PC-3 (cell line): ENCODE measurements at regions of chr4 and their contacts with region 1.

Region 1: GRCh38 chr4:154807042-154807630 is 26.1 kb downstream of the RBM46 start:
- DNase-seq: peak; percentile 71
- ATAC-seq: no peak
- H3K4me3 ChIP-seq: peak overlapping the region; percentile 41; the same call in 1 of the 2 replicates
- H3K27ac ChIP-seq: no peak overlapping the region
- H3K4me1 ChIP-seq: no peaks in the 10 kb centered on the region
- H3K27me3 ChIP-seq: no peaks in the 10 kb centered on the region
- CTCF ChIP-seq: peak; percentile 89

Region 2: DNA sequence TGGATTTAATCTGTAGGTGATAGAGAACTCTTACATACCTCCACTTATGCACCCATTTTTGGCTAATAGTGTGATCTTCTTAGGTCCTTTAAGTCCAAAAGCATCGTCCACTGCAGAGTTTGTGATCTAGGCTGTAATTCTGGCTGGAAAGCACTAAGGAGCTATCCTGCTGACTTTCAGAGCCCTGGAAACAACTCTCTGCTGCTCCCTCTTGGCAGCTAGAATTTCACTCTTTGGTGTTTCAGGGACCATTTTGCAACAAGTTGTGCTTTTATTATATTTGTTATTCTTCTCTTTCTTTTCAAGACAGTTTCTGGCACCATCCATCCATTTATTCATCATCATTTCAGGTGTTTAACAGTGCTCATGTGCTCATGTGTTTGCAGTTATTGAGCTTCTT is 104.0 kb after region 1 on chr4:
- CTCF ChIA-PET with region 1: interaction called, 8 read pairs
- POLR2A ChIA-PET with region 1: no interaction called
- intact Hi-C with region 1: loop called (anchors 1 kb)
- DNase-seq: peak; percentile 34
- ATAC-seq: no peak
- H3K4me3 ChIP-seq: no peak overlapping the region
- H3K27ac ChIP-seq: no peak overlapping the region
- H3K4me1 ChIP-seq: peaks cover 12% of the 10 kb centered on the region
- H3K27me3 ChIP-seq: no peaks in the 10 kb centered on the region
- CTCF ChIP-seq: peak; percentile 46

Region 3: GRCh38 chr4:154928640-154929257 is 121.6 kb after region 1 on chr4:
- CTCF ChIA-PET with region 1: interaction called, 5 read pairs
- POLR2A ChIA-PET with region 1: no interaction called
- intact Hi-C with region 1: loop called (anchors 1 kb)
- DNase-seq: peak; percentile 58
- ATAC-seq: peak; percentile 71
- H3K4me3 ChIP-seq: no peak overlapping the region
- H3K27ac ChIP-seq: no peak overlapping the region
- H3K4me1 ChIP-seq: no peaks in the 10 kb centered on the region
- H3K27me3 ChIP-seq: no peaks in the 10 kb centered on the region
- CTCF ChIP-seq: peak; percentile 74

Region 4: DNA sequence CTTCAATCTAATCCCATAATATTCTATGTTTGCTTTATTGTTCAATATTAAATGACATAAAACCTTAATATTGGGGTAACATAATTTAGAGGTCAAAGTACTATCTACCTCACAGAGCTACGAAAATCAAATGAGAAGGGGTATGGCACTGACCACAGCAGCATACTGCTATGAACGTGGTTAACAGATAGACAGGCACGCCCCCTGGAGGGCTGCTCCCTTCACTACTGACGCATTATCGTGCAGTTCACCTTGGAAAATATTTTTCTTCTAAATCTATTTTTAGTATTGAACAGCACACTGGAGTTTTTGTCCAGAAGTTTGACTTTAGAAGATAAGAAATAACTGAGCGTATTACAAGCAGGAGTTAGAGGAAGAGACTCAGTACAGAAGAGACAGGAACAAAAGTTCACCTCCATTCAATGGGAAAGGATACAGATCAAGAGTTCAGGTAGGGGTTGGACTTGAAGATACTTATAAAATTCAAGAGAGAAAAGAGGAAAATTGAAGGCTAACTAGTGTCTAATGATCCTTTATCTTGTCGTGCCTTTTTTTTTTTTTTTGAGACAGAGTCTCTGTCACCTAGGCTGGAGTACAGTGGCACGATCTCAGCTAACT is 546.9 kb after region 1 on chr4:
- CTCF ChIA-PET with region 1: no interaction called
- POLR2A ChIA-PET with region 1: no interaction called
- intact Hi-C with region 1: loop called (anchors 5 kb)
- DNase-seq: peak; percentile 73
- ATAC-seq: peak; percentile 84
- H3K4me3 ChIP-seq: no peak overlapping the region
- H3K27ac ChIP-seq: no peak overlapping the region
- H3K4me1 ChIP-seq: no peaks in the 10 kb centered on the region
- H3K27me3 ChIP-seq: no peaks in the 10 kb centered on the region
- CTCF ChIP-seq: peak; percentile 86

Region 5: DNA sequence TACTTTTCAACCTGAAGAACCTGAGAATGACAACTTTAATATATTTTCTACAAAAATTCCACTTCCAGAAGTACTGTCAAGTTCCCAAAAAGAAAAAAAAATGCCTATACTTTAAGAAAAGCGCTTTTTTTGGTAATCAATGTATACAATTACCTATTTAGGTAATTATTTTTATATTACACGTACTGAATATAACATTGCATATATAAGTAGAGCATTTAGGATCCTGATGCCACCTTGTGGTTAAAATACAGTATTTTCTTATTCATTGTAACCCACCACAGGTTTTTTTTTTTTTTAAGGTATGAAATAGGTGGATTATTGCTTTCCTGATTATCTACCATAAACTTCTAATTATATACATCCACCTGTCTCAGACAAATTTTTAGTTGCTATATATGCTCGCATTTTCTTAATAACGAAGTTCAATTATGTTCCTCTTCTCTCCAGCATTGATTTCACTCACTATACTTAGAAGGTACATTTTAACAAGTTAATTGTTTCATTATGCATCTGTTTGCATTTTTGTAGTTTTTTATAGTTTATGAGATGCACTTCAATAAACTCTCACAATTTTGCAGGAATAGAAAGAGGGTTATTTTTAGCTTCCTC is 564.4 kb after region 1 on chr4:
- CTCF ChIA-PET with region 1: no interaction called
- POLR2A ChIA-PET with region 1: no interaction called
- intact Hi-C with region 1: loop called (anchors 5 kb)
- DNase-seq: peak; percentile 61
- ATAC-seq: 0 out of 2 replicates have a peak, but pooled peaks have one; percentile 25
- H3K4me3 ChIP-seq: no peak overlapping the region
- H3K27ac ChIP-seq: no peak overlapping the region
- H3K4me1 ChIP-seq: peaks cover 14% of the 10 kb centered on the region
- H3K27me3 ChIP-seq: no peaks in the 10 kb centered on the region
- CTCF ChIP-seq: peak; percentile 59